ENCODE measurements at regions of chr3 and their contacts with region 1.

Region 1: GRCh38 chr3:192917404-192918274 is at the start of gene MB21D2:
- DNase-seq: peak; percentile 74
- H3K4me3 Mint-ChIP-seq: peak within 1 kb of the TSS; percentile 91
- H3K27ac Mint-ChIP-seq: peak within 1 kb of the TSS; percentile 93
- H3K4me1 Mint-ChIP-seq: peaks cover 52% of the 10 kb centered on the region
- H3K27me3 Mint-ChIP-seq: peaks cover 56% of the 10 kb centered on the region
- total RNA-seq, gene MB21D2: 19.8 to 21.0 TPM

Region 2: DNA sequence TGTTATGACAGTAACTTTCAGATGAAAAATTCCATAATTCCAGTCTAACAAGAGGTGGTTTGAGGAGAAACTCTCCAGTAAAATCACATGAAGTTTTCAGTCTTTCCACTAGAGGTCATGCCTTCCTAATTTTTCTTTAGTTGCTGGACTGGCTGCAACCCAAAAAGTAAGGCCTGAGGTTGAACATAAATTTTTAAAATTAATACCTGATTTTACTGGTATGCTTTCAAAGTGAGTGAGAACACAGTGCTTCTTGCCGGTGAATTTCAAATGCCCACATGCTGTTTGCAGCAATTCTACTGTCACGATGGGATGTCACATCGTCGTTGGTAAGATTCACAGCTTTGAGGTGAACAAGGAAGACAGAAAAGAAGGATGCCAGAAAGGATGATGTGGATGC is 101.3 kb before region 1 on chr3:
- CTCF ChIA-PET with region 1: interaction called, 95 read pairs
- POLR2A ChIA-PET with region 1: interaction called, 65 read pairs
- DNase-seq: no peak
- H3K4me3 Mint-ChIP-seq: no peak overlapping the region
- H3K27ac Mint-ChIP-seq: peak overlapping the region; percentile 33
- H3K4me1 Mint-ChIP-seq: peaks cover 53% of the 10 kb centered on the region
- H3K27me3 Mint-ChIP-seq: peaks cover 1% of the 10 kb centered on the region

Region 3: DNA sequence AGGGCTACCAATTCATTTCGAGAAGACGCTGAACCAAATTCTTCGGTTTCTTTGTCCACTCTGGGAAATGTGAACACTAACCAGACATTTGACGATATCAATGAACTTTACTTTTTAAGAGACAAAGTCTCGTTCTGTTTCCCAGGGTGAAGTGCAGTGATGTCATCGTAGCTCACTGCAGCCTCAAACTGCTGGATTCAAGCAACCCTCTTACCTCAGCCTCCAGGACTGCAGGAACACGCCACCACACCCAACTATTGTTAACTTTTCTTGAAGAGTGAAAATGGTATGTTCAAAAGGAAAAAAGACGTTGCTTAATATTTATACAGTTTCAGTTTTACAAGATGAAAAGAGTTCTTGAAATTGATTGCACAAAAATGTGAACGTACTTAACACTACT is 30.6 kb before region 1 on chr3:
- CTCF ChIA-PET with region 1: interaction called, 25 read pairs
- POLR2A ChIA-PET with region 1: interaction called, 299 read pairs
- DNase-seq: no peak
- H3K4me3 Mint-ChIP-seq: peak overlapping the region; percentile 61
- H3K27ac Mint-ChIP-seq: peak overlapping the region; percentile 80
- H3K4me1 Mint-ChIP-seq: peaks cover 75% of the 10 kb centered on the region
- H3K27me3 Mint-ChIP-seq: no peaks in the 10 kb centered on the region

Region 4: DNA sequence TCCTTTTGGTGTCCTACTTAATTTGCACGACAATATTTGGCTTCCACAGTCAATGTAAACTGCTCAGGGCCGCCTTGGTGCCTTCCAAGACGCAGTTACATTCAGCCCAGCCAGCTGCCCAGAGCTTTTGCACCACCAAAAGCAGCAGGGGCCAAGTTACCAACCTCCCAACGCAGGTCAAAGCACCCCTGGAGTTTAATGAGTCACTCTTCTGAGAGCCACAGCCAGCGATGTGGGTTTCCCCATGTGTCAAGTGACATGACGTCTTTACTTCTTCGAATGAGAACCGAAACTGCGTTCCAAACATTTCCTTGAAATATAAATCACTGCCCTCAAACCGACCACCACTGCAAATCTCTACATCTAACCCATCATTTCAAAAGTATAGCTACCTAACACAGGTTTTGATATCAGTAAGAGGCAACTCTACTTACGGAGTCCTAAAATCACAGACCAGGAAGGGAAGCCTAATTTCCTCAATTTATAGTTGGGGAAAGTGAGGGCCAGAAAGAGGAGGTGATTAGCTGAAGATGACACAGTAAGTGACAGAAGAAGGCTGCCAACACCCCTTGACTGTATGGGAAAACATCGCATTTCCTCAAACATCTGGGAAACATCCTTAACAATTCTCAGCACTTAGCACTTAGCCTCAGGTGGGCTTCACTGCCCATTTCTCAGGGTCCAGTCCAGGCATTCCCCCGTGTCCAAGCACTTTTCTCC is 24.5 kb before region 1 on chr3:
- CTCF ChIA-PET with region 1: interaction called, 25 read pairs
- POLR2A ChIA-PET with region 1: interaction called, 299 read pairs
- DNase-seq: peak; percentile 86
- H3K4me3 Mint-ChIP-seq: peak overlapping the region; percentile 33
- H3K27ac Mint-ChIP-seq: peak overlapping the region; percentile 96
- H3K4me1 Mint-ChIP-seq: peaks cover 96% of the 10 kb centered on the region
- H3K27me3 Mint-ChIP-seq: peaks cover 2% of the 10 kb centered on the region

Region 5: DNA sequence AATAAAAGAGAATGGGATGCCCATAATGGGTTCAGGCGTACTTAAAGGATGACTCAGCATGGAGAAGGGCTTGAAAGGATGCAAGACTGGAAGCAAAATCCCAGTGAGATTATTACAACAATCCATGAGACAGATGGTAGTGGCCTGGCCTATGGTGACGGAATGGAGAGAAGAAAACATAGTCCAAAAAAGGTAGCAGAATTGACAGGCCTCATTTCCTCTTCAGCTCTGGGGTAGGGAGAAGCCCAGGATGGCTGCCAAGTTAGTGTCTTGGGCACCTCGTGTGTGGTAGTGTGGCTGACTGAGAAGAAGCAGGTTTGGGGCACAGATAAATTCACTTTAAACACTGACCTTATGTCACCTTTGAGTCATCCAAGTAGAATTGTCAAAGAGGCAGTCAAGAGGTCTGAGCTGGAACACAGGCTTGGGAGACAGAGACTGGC is 18.1 kb before region 1 on chr3:
- CTCF ChIA-PET with region 1: interaction called, 22 read pairs
- POLR2A ChIA-PET with region 1: interaction called, 299 read pairs
- DNase-seq: no peak
- H3K4me3 Mint-ChIP-seq: no peak overlapping the region
- H3K27ac Mint-ChIP-seq: peak overlapping the region; percentile 97
- H3K4me1 Mint-ChIP-seq: peaks cover 78% of the 10 kb centered on the region
- H3K27me3 Mint-ChIP-seq: peaks cover 2% of the 10 kb centered on the region

Region 6: DNA sequence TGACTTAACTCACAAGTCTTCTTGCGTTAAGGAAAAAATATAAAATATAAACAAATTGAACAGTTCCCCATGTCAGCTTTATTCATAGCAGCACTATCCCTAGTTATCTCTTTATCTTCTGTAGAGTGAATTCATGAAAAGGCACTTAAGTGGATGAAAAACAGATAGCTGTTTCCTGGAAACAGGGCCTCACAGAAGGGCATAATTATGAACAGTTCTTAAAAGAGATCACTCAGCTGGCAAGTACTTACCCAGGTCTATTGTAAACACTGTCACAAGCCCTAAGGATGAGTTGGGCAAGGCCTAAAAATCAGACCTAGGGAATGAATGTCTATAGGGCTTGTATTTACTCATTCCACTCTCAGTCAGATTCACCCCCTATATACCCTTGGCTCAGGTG is 10.7 kb before region 1 on chr3:
- CTCF ChIA-PET with region 1: interaction called, 7 read pairs
- POLR2A ChIA-PET with region 1: interaction called, 42 read pairs
- DNase-seq: no peak
- H3K4me3 Mint-ChIP-seq: no peak overlapping the region
- H3K27ac Mint-ChIP-seq: peak overlapping the region; percentile 58
- H3K4me1 Mint-ChIP-seq: peaks cover 57% of the 10 kb centered on the region
- H3K27me3 Mint-ChIP-seq: no peaks in the 10 kb centered on the region

Region 7: GRCh38 chr3:192957441-192958021 is 39.9 kb after region 1 on chr3:
- CTCF ChIA-PET with region 1: no interaction called
- POLR2A ChIA-PET with region 1: no interaction called
- DNase-seq: no peak
- H3K4me3 Mint-ChIP-seq: no peak overlapping the region
- H3K27ac Mint-ChIP-seq: no peak overlapping the region
- H3K4me1 Mint-ChIP-seq: peaks cover 3% of the 10 kb centered on the region
- H3K27me3 Mint-ChIP-seq: no peaks in the 10 kb centered on the region

Region 8: DNA sequence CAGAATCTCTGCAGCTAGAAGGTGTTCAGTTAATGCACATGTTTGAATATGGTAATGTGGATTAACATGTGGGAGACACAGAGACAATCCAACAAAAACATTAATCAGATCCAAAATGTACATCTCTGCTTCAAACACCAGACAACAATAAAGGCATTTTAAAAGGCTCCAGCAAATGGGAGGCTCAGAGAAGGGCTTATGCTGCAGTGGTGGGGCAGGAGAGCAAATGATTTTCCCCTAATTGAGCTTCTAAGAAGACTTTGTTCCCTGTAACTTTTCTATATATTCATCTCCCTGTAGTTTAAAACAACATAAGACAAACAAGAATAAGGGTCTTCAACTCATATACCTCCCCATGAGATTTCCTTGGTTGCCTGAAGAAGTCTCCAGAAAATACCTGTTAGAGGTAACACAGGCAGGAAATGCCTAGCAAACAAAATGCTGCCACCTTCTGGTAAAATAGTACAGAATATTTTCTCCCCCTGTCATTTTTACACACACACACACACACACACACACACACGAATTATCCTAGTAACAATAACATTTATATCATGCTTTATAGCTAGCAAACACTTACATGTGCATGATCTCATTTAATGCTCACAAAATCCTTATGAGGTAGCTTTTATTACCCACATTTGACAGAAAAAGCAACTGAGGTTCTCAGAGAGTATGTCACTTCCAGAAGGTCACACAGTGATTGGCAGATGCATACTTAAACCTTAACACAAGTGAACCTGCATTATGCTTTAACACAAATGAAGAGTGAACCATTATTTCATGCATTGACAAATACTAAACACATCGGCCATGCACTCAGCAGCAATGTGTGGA is 123.4 kb after region 1 on chr3:
- CTCF ChIA-PET with region 1: interaction called, 18 read pairs
- POLR2A ChIA-PET with region 1: interaction called, 6 read pairs
- DNase-seq: no peak
- H3K4me3 Mint-ChIP-seq: no peak overlapping the region
- H3K27ac Mint-ChIP-seq: no peak overlapping the region
- H3K4me1 Mint-ChIP-seq: peaks cover 4% of the 10 kb centered on the region
- H3K27me3 Mint-ChIP-seq: no peaks in the 10 kb centered on the region